Heart left ventricle (tissue), 16 donors: ENCODE measurements at regions of chr10 and their contacts with region 1.

Region 1: GRCh38 chr10:71817831-71818655 is 33.0 kb downstream of the PSAP start:
- DNase-seq: peak; percentile 41 to 85 (median 76)
- ATAC-seq: peak; percentile 70 to 83 (median 74)
- H3K4me3 ChIP-seq: no peak overlapping the region
- H3K27ac ChIP-seq: peak overlapping the region; percentile 36 to 80 (median 70)
- H3K4me1 ChIP-seq: peaks cover 0 to 52% (median 22%) of the 10 kb centered on the region in 12 donors
- H3K27me3 ChIP-seq: no peaks in the 10 kb centered on the region
- CTCF ChIP-seq: no peak
- POLR2A ChIP-seq: no peak

Region 2: GRCh38 chr10:71873582-71874211 is 55.7 kb after region 1 on chr10:
- intact Hi-C with region 1: no loop called
- DNase-seq: no peak
- ATAC-seq: peak in 1 of 4 donors; percentile 21
- H3K4me3 ChIP-seq: no peak overlapping the region
- H3K27ac ChIP-seq: no peak overlapping the region
- H3K4me1 ChIP-seq: peaks cover 0 to 24% (median 0%) of the 10 kb centered on the region in 12 donors
- H3K27me3 ChIP-seq: no peaks in the 10 kb centered on the region
- CTCF ChIP-seq: no peak
- POLR2A ChIP-seq: no peak

Region 3: GRCh38 chr10:71899665-71900412 is 81.8 kb after region 1 on chr10:
- intact Hi-C with region 1: loop called in 1 of 10 experiments (anchors 5 kb)
- DNase-seq: peak in 1 of 5 donors; percentile 9
- ATAC-seq: no peak
- H3K4me3 ChIP-seq: no peak overlapping the region
- H3K27ac ChIP-seq: no peak overlapping the region
- H3K4me1 ChIP-seq: peaks cover 0 to 16% (median 0%) of the 10 kb centered on the region in 12 donors
- H3K27me3 ChIP-seq: no peaks in the 10 kb centered on the region
- CTCF ChIP-seq: no peak
- POLR2A ChIP-seq: no peak

Region 4: DNA sequence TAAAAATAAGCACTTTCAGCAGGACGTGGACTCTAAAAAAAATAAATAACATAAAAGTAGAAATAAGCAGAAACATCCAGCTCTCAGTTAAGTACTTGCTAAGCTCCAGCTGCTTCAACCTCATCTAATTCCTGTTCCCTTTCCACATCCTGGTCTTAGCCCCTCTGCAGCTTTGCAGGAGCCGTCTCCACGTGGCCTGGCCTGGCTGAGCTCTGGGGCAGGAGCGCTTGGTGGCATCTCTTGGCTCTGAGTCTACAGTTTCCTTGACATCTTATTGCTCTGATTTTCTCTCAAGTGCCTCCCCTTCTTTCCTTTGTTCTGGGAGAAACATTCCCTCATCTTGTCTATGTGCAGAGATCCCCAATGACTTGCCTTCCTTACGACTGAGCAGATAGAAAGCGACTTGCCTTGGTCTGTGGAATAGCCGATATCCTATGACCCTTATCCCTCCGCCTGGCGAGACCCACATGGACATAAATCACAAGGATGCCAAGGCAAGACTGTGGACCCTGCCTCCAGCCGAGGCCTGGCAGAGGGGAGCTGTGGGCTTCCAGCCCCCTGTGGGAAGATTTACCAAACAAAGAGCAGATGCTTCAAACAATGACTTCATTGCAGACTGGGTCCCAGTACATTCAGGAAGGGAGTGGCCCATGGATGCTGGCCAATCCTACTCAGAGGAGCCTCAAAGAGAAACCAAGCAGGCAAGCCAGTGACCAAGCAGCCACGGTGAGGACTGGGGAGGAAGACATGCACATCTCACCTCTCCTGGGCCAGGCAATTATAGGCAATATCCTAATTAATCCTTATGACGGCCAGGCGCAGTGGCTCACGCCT is 208.5 kb after region 1 on chr10:
- intact Hi-C with region 1: no loop called
- DNase-seq: peak in 2 of 5 donors; percentile 57 to 68
- ATAC-seq: peak in 1 of 4 donors; percentile 13
- H3K4me3 ChIP-seq: no peak overlapping the region
- H3K27ac ChIP-seq: no peak overlapping the region
- H3K4me1 ChIP-seq: peaks cover 0 to 33% (median 6%) of the 10 kb centered on the region in 12 donors
- H3K27me3 ChIP-seq: no peaks in the 10 kb centered on the region
- CTCF ChIP-seq: no peak
- POLR2A ChIP-seq: no peak